H1 (cell line): ENCODE measurements at regions of chr9 and their contacts with region 1.

Region 1: GRCh38 chr9:124617471-124618141 is 110.4 kb upstream of the NR5A1 start:
- DNase-seq: peak; percentile 58 to 93
- H3K4me3 ChIP-seq: peak overlapping the region in 1 of 4 experiments; percentile 16; a peak in 1 of 8 replicates
- H3K27ac ChIP-seq: peak overlapping the region; percentile 30
- H3K4me1 ChIP-seq: peaks cover 0 to 21% (median 10%) of the 10 kb centered on the region in 4 experiments; a peak in 4 of 7 replicates
- H3K27me3 ChIP-seq: no peaks in the 10 kb centered on the region
- CTCF ChIP-seq: peak; percentile 89 to 94 (median 89)
- EP300 ChIP-seq: no peak
- POLR2A ChIP-seq: no peak
- RAD21 ChIP-seq: peak; percentile 92 to 97

Region 2: GRCh38 chr9:124537926-124538325 is 79.7 kb before region 1 on chr9:
- CTCF ChIA-PET with region 1: interaction called, 10 read pairs
- POLR2A ChIA-PET with region 1: no interaction called
- DNase-seq: no peak
- H3K4me3 ChIP-seq: no peak overlapping the region
- H3K27ac ChIP-seq: no peak overlapping the region
- H3K4me1 ChIP-seq: no peaks in the 10 kb centered on the region
- H3K27me3 ChIP-seq: no peaks in the 10 kb centered on the region
- CTCF ChIP-seq: no peak
- EP300 ChIP-seq: no peak
- POLR2A ChIP-seq: no peak
- RAD21 ChIP-seq: no peak

Region 3: DNA sequence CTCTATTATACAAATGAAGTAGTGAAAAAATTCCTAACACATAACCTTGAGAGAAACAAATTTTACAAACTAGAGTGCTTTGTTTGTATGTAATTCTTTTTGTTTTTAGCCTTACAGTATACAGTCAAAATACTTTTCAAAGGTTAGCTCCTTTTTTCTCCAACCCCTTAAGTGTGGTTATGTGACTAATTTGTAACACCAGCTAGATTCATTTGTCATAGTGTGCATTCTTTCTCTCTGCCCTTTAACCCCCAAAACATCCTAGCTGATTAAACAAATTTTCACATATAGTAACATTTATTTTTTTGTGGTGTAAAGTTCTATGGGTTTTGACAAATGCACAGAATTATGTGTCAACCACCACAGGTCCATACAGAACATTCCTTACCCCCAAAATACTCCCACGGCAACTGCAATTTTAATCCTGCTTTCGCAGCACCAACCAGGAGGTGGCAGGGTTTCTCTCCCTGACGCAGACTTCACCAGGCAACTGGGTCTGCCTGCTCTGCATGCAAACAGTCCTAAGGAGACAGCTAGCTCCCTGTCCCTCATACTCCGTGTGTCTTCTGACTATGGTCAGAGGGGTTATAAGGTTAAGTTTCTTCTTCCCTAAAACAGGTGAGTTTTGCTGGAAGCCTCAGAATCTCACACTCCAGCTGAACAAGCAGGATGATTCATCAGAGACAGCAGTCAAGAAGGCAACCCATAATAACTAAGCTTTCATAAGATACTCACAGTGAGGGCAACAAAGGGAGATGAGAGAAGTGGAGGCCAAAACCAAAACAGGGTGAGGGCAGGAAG is 65.9 kb before region 1 on chr9:
- CTCF ChIA-PET with region 1: interaction called, 86 read pairs
- POLR2A ChIA-PET with region 1: interaction called, 3 read pairs
- DNase-seq: peak; percentile 56 to 78
- H3K4me3 ChIP-seq: no peak overlapping the region
- H3K27ac ChIP-seq: no peak overlapping the region
- H3K4me1 ChIP-seq: peaks cover 3 to 8% (median 5%) of the 10 kb centered on the region in 4 experiments; a peak in 5 of 7 replicates
- H3K27me3 ChIP-seq: no peaks in the 10 kb centered on the region
- CTCF ChIP-seq: peak; percentile 86 to 95 (median 93)
- EP300 ChIP-seq: no peak
- POLR2A ChIP-seq: no peak
- RAD21 ChIP-seq: peak; percentile 94 to 98

Region 4: GRCh38 chr9:124567362-124567761 is 50.2 kb before region 1 on chr9:
- CTCF ChIA-PET with region 1: interaction called, 22 read pairs
- POLR2A ChIA-PET with region 1: no interaction called
- DNase-seq: no peak
- H3K4me3 ChIP-seq: no peak overlapping the region
- H3K27ac ChIP-seq: no peak overlapping the region
- H3K4me1 ChIP-seq: peaks cover 5 to 16% (median 11%) of the 10 kb centered on the region in 4 experiments; a peak in 6 of 7 replicates
- H3K27me3 ChIP-seq: no peaks in the 10 kb centered on the region
- CTCF ChIP-seq: no peak
- EP300 ChIP-seq: no peak
- POLR2A ChIP-seq: no peak
- RAD21 ChIP-seq: no peak

Region 5: GRCh38 chr9:124593651-124594058 is 24.0 kb before region 1 on chr9:
- CTCF ChIA-PET with region 1: interaction called, 88 read pairs
- POLR2A ChIA-PET with region 1: interaction called, 5 read pairs
- DNase-seq: peak; percentile 59 to 71
- H3K4me3 ChIP-seq: peak overlapping the region; percentile 12 to 55 (median 28); a peak in 6 of 8 replicates
- H3K27ac ChIP-seq: peak overlapping the region; percentile 69
- H3K4me1 ChIP-seq: peaks cover 7 to 39% (median 29%) of the 10 kb centered on the region in 4 experiments
- H3K27me3 ChIP-seq: no peaks in the 10 kb centered on the region
- CTCF ChIP-seq: no peak
- EP300 ChIP-seq: peak in 1 of 2 experiments; percentile 91; a peak in 2 of 3 replicates
- POLR2A ChIP-seq: peak in 1 of 2 experiments; percentile 18; a peak in 2 of 3 replicates
- RAD21 ChIP-seq: peak in 1 of 2 experiments; percentile 20; a peak in 1 of 4 replicates

Region 6: GRCh38 chr9:124645274-124645673 is 27.7 kb after region 1 on chr9:
- CTCF ChIA-PET with region 1: interaction called, 46 read pairs
- POLR2A ChIA-PET with region 1: no interaction called
- DNase-seq: no peak
- H3K4me3 ChIP-seq: no peak overlapping the region
- H3K27ac ChIP-seq: no peak overlapping the region
- H3K4me1 ChIP-seq: no peaks in the 10 kb centered on the region
- H3K27me3 ChIP-seq: no peaks in the 10 kb centered on the region
- CTCF ChIP-seq: no peak
- EP300 ChIP-seq: no peak
- POLR2A ChIP-seq: no peak
- RAD21 ChIP-seq: no peak

Region 7: DNA sequence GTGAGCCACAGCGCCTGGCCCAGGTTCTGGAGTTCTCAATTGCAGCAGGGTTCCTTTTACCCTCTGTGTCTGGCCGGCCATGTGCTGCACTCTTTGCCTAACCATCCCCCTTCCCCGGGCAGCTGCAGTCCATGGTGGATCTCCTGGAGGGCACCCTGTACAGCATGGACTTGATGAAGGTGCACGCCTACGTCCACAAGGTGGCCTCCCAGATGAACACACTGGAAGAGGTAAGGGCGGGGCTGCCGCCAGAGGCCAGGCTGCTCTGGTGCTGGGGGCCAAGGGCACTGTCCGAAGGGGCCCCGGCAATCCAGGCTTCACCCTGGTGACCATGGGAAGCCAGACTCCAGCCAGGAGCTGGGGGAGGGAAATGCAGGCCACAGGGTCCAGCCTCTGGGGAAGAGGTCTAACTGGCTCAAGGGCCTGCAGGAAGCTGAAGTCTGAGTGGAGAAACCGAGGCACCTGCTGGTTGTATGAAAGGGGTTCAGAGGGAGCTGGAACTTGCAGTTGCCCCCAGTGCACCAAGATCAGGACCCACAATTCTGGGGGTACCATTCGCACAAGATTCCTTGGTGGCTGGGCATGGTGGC is 177.4 kb after region 1 on chr9:
- CTCF ChIA-PET with region 1: no interaction called
- POLR2A ChIA-PET with region 1: no interaction called
- DNase-seq: no peak
- H3K4me3 ChIP-seq: no peak overlapping the region
- H3K27ac ChIP-seq: no peak overlapping the region
- H3K4me1 ChIP-seq: peaks cover 0 to 12% (median 0%) of the 10 kb centered on the region in 4 experiments; a peak in 3 of 7 replicates
- H3K27me3 ChIP-seq: no peaks in the 10 kb centered on the region
- CTCF ChIP-seq: peak; percentile 13 to 27 (median 16); a peak in 3 of 4 replicates
- EP300 ChIP-seq: no peak
- POLR2A ChIP-seq: no peak
- RAD21 ChIP-seq: peak in 1 of 2 experiments; percentile 30; a peak in 1 of 4 replicates

Region 8: GRCh38 chr9:124852829-124853531 is 235.4 kb after region 1 on chr9 and contains the start of gene WDR38:
- CTCF ChIA-PET with region 1: interaction called, 32 read pairs
- POLR2A ChIA-PET with region 1: interaction called, 4 read pairs
- DNase-seq: peak in 1 of 2 experiments; percentile 92
- H3K4me3 ChIP-seq: peak within 1 kb of the TSS; percentile 25 to 61 (median 48)
- H3K27ac ChIP-seq: no peak within 1 kb of the TSS
- H3K4me1 ChIP-seq: 0 out of 7 replicates have a peak, but pooled peaks cover 0 to 3% (median under 1%) of the 10 kb centered on the region in 4 experiments
- H3K27me3 ChIP-seq: no peaks in the 10 kb centered on the region
- CTCF ChIP-seq: peak in 2 of 3 experiments; percentile 73 to 91; a peak in 3 of 4 replicates
- EP300 ChIP-seq: no peak
- POLR2A ChIP-seq: no peak
- RAD21 ChIP-seq: peak; percentile 74 to 77
- total RNA-seq, gene WDR38: not detected in 2 replicates